Pancreas (tissue), 10 donors: ENCODE measurements at regions of chr7 and their contacts with region 1.

Region 1: GRCh38 chr7:151304856-151305255 is 36.8 kb upstream of the NUB1 start:
- DNase-seq: no peak
- ATAC-seq: no peak
- H3K4me3 ChIP-seq: no peak overlapping the region
- H3K27ac ChIP-seq: no peak overlapping the region
- H3K4me1 ChIP-seq: peaks cover 0 to 3% (median 0%) of the 10 kb centered on the region in 3 donors
- H3K27me3 ChIP-seq: peaks cover 0 to 3% (median 0%) of the 10 kb centered on the region in 4 donors
- CTCF ChIP-seq: no peak

Region 2: DNA sequence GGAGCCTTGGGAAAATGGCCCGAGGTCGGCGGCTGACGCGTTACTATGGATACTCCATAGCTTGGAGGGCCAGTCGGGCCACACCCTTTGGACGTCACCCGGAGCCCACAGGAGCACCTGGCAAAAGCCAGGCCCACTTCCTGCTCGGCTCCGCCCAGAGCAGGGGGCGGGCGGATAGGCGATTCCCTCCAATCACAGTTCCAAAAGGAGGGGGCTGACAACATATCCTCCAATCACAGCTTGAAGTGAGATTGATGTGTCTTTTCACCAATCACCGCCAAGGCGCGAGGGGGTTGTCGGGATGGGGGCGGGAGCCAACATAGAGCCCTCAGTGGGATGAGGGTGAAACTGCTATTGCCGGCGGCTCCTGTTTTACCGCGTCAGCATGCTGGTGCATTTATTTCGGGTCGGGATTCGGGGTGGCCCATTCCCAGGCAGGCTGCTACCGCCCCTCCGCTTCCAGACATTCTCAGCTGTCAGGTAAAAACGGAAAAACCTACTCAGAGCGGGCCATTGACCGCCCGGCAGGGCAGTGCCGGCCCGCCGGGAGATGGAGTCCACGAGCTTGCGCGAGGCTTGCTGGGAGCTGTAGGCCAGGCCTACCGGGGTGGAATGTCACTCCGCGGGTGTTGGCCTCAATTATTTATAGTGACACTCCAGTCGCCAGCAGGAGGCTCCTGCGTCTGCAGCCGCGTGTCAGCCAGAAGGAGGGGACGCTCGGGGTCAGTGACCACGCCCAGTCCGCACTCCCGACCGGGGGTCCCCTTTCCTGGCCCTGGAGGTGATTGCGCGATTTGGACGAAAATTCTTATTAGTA is 276.5 kb before region 1 on chr7 and contains the start of gene ABCB8:
- intact Hi-C with region 1: no loop called
- DNase-seq: peak; percentile 93 to 100 (median 99)
- ATAC-seq: peak; percentile 93 to 96 (median 94)
- H3K4me3 ChIP-seq: peak within 1 kb of the TSS; percentile 62 to 93 (median 75)
- H3K27ac ChIP-seq: peak within 1 kb of the TSS; percentile 56 to 74 (median 71)
- H3K4me1 ChIP-seq: peaks cover 0 to 6% (median 0%) of the 10 kb centered on the region in 3 donors
- H3K27me3 ChIP-seq: no peaks in the 10 kb centered on the region
- CTCF ChIP-seq: peak in 3 of 4 donors; percentile 38 to 41 (median 39)
- total RNA-seq, gene ABCB8: 6.1 to 18.5 (median 10.1) TPM

Region 3: DNA sequence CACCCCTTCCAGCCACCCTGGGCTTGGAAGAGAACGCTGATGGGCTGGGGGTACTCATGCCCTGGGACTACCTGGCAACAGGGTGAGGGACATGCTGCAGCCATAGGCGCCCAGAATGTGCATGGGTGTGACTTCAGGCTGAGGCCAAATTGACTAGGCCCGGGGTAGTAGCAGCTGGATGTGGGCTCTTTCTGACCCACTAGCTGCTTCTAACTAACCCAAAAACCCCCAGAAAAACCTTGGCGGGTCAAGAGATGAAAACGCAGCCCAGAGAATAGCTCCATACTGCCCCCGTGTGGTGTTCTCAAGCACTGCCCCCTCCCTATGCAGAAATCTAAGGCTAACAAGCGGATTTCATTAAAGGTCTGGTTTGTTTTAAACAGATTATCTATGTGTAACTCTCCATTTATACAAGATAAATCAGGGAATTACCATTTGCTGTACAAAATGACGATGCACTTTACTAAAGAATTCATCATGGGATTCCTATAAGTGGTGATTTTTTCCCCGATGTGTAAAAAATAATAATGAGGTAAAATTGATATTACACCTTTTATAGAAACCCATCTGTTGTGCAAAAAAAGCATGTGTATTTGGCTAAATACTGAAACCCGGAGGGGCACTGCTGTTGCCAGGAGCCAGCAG is 60.5 kb before region 1 on chr7:
- intact Hi-C with region 1: loop called in 2 of 3 experiments (anchors 5 to 10 kb)
- DNase-seq: peak in 2 of 6 donors; percentile 55 to 68
- ATAC-seq: peak in 3 of 4 donors; percentile 22 to 48 (median 44)
- H3K4me3 ChIP-seq: no peak overlapping the region
- H3K27ac ChIP-seq: no peak overlapping the region
- H3K4me1 ChIP-seq: peaks cover 12 to 20% (median 19%) of the 10 kb centered on the region in 3 donors
- H3K27me3 ChIP-seq: no peaks in the 10 kb centered on the region
- CTCF ChIP-seq: peak; percentile 73 to 87 (median 84)